Activated CD4-positive, alpha-beta T cell treated with anti-CD3 and anti-CD28 coated beads, Interleukin-2, amount 10 ng/mL, durations not matched to agents 24 days and 14 days (primary cell): ENCODE measurements at regions of chr1 and their contacts with region 1.

Region 1: GRCh38 chr1:160862203-160863060 is at the start of gene CD244:
- DNase-seq: peak; percentile 81
- H3K4me3 Mint-ChIP-seq: peak within 1 kb of the TSS; percentile 24
- H3K27ac Mint-ChIP-seq: peak within 1 kb of the TSS; percentile 65
- H3K4me1 Mint-ChIP-seq: peaks cover 22% of the 10 kb centered on the region
- H3K27me3 Mint-ChIP-seq: peaks cover 2% of the 10 kb centered on the region
- total RNA-seq, gene CD244: not detected in 2 replicates

Region 2: DNA sequence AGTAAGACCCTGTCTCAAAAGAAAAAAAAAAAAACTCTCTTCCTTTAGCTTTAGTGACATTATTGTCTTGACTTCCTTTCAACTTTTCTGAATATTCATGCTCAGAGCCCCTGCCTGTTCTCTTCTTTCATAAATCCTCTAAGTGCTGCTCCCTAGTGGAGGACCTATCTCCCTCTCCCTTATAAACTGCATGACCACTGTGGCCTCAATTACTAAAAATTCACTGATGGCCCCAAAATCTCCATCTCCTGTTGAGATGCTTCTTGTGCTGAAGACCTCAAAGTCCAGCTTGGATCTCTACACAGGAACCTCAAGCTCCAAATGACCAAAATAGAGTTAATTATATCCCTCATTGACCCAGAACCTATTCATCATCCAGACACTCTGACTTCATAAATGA is 14.8 kb after region 1 on chr1:
- intact Hi-C with region 1: loop called (anchors 1 kb)
- DNase-seq: peak; percentile 71
- H3K4me3 Mint-ChIP-seq: no peak overlapping the region
- H3K27ac Mint-ChIP-seq: no peak overlapping the region
- H3K4me1 Mint-ChIP-seq: peaks cover 15% of the 10 kb centered on the region
- H3K27me3 Mint-ChIP-seq: peaks cover 7% of the 10 kb centered on the region

Region 3: DNA sequence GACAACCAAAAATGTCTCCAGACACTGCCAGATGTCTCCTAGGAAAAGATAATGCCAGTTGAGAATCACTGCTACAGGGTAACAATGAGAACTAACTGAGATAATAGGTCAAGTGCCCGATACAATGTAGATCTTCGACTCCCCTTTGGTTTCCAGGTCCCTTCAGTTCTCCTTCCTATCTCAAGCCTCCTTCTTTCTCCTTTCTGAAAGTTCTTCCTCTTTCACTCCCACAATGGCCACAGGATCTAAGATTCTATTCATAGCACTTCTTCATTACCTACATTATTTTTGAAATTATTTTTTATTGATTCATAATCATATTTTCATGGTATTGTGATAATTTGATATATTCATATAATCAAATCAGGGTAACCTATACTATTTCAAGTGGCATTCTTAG is 249.1 kb after region 1 on chr1:
- intact Hi-C with region 1: no loop called
- DNase-seq: no peak
- H3K4me3 Mint-ChIP-seq: no peak overlapping the region
- H3K27ac Mint-ChIP-seq: no peak overlapping the region
- H3K4me1 Mint-ChIP-seq: peaks cover 43% of the 10 kb centered on the region
- H3K27me3 Mint-ChIP-seq: no peaks in the 10 kb centered on the region